Head of caudate nucleus (tissue), 42 donors: ENCODE measurements at regions of chr1 and their contacts with region 1.

Region 1: GRCh38 chr1:112390775-112391602 is 5.0 kb upstream of the CTTNBP2NL start:
- DNase-seq: peak; percentile 77 to 96 (median 90)

Region 2: GRCh38 chr1:111541721-111542120 is 849.3 kb before region 1 on chr1:
- intact Hi-C with region 1: no loop called
- DNase-seq: no peak

Region 3: DNA sequence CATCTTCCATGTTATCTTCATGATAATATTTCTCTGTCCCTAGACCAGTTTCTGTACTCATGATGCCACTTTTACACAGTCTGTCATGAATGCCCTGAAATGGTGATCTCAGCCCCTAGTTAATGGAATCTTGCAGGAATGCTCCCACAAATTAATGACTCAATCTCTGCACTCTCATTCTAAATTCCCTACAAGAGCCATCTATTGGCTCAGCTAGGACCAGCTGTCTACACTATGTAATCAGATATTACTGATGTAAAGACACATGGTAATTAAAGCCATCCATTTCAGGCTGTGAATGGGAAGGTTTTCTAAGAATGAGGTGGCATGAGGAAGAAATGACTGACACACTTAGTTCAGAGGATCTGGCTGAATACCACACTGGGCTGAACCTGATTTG is 202.4 kb before region 1 on chr1:
- intact Hi-C with region 1: no loop called
- DNase-seq: no peak

Region 4: DNA sequence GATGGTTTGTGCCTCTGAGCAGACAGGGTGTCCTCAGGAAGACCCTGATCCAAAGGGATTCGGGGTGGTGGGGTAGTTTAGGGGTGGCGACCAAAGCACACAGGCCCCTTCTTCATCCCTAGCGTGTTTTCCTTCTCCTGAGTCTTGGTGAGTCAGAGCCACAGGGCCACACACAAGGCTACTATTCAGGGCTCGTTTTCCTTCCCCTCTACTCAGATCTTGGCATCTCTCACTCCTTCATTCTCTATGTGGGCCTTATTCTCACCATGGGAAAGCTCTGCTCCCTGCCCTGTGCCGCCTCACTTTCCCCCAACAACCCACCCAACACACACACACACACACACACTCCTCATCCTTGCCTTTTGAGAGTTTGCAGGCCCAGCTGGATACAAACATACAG is 74.1 kb after region 1 on chr1:
- intact Hi-C with region 1: loop called (anchors 2 kb)
- DNase-seq: peak in 19 of 42 donors; percentile 13 to 76 (median 39)

Region 5: GRCh38 chr1:112619520-112620376 is 228.8 kb after region 1 on chr1 and contains the start of gene CAPZA1:
- intact Hi-C with region 1: loop called (anchors 10 kb)
- DNase-seq: peak; percentile 84 to 97 (median 92)

Region 6: GRCh38 chr1:112706908-112707663 is 316.1 kb after region 1 on chr1 and contains the start of gene RHOC:
- intact Hi-C with region 1: loop called (anchors 10 kb)
- DNase-seq: peak; percentile 55 to 91 (median 82)